ENCODE measurements at regions of chr3 and their contacts with region 1.

Region 1: GRCh38 chr3:52742418-52743041 is 28.2 kb downstream of the NEK4 start:
- DNase-seq: peak; percentile 33
- ATAC-seq: peak; percentile 90
- H3K4me3 ChIP-seq: no peak overlapping the region
- H3K27ac ChIP-seq: no peak overlapping the region
- H3K4me1 ChIP-seq: no peaks in the 10 kb centered on the region
- H3K27me3 ChIP-seq: no peaks in the 10 kb centered on the region
- CTCF ChIP-seq: peak; percentile 56 to 76 (median 69)
- POLR2A ChIP-seq: no peak
- RAD21 ChIP-seq: peak; percentile 80

Region 2: GRCh38 chr3:52455283-52456168 is 287.0 kb before region 1 on chr3 and contains the start of gene NISCH:
- CTCF ChIA-PET with region 1: no interaction called
- POLR2A ChIA-PET with region 1: no interaction called
- RAD21 ChIA-PET with region 1: no interaction called
- intact Hi-C with region 1: no loop called
- DNase-seq: peak; percentile 40
- ATAC-seq: peak; percentile 84
- H3K4me3 ChIP-seq: peak within 1 kb of the TSS; percentile 80 to 94
- H3K27ac ChIP-seq: peak within 1 kb of the TSS; percentile 77
- H3K4me1 ChIP-seq: peaks cover 36 to 61% of the 10 kb centered on the region in 2 experiments
- H3K27me3 ChIP-seq: no peaks in the 10 kb centered on the region
- CTCF ChIP-seq: no peak
- POLR2A ChIP-seq: peak; percentile 66
- RAD21 ChIP-seq: no peak
- total RNA-seq, gene NISCH: 72.8 TPM

Region 3: DNA sequence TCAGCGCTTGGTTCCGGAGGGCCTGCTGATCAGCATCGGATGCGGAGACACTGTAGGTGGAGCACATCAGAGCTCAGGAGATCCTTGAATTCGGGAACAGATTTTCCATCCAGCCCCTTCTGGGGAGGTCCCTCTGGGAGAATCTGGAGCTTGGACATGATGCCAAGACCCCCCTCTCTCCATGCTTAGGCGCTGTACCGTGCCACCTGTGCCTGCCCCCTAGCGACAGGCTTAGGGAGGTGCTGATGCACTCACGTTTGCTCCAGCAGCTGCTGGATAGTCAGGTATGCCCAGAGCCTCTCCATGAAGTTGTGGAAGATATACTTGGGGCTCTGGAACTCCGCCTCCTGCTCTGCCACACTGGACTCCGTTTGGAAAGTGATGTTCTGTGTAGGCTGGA is 78.2 kb after region 1 on chr3:
- CTCF ChIA-PET with region 1: interaction called, 3 read pairs
- POLR2A ChIA-PET with region 1: no interaction called
- RAD21 ChIA-PET with region 1: no interaction called
- intact Hi-C with region 1: loop called (anchors 2 kb)
- DNase-seq: peak; percentile 12
- ATAC-seq: peak; percentile 94
- H3K4me3 ChIP-seq: no peak overlapping the region
- H3K27ac ChIP-seq: no peak overlapping the region
- H3K4me1 ChIP-seq: peaks cover 0 to 6% of the 10 kb centered on the region in 2 experiments; a peak in 1 of 4 replicates
- H3K27me3 ChIP-seq: no peaks in the 10 kb centered on the region
- CTCF ChIP-seq: peak; percentile 46 to 96 (median 90); a peak in 5 of 6 replicates
- POLR2A ChIP-seq: no peak
- RAD21 ChIP-seq: no peak; the same call in 1 of the 2 replicates

Region 4: GRCh38 chr3:52934630-52935530 is 192.3 kb after region 1 on chr3:
- CTCF ChIA-PET with region 1: no interaction called
- POLR2A ChIA-PET with region 1: no interaction called
- RAD21 ChIA-PET with region 1: no interaction called
- intact Hi-C with region 1: loop called (anchors 5 kb)
- DNase-seq: peak; percentile 23
- ATAC-seq: peak; percentile 98
- H3K4me3 ChIP-seq: no peak overlapping the region
- H3K27ac ChIP-seq: no peak overlapping the region
- H3K4me1 ChIP-seq: no peaks in the 10 kb centered on the region
- H3K27me3 ChIP-seq: no peaks in the 10 kb centered on the region
- CTCF ChIP-seq: peak; percentile 53 to 78 (median 76); a peak in 5 of 6 replicates
- POLR2A ChIP-seq: no peak
- RAD21 ChIP-seq: peak; percentile 52

Region 5: GRCh38 chr3:52986938-52987337 is 244.4 kb after region 1 on chr3:
- CTCF ChIA-PET with region 1: no interaction called
- POLR2A ChIA-PET with region 1: no interaction called
- RAD21 ChIA-PET with region 1: no interaction called
- intact Hi-C with region 1: loop called (anchors 5 kb)
- DNase-seq: no peak
- ATAC-seq: no peak
- H3K4me3 ChIP-seq: no peak overlapping the region
- H3K27ac ChIP-seq: no peak overlapping the region
- H3K4me1 ChIP-seq: no peaks in the 10 kb centered on the region
- H3K27me3 ChIP-seq: no peaks in the 10 kb centered on the region
- CTCF ChIP-seq: peak in 2 of 3 experiments; percentile 36 to 39; a peak in 3 of 6 replicates
- POLR2A ChIP-seq: no peak
- RAD21 ChIP-seq: peak; percentile 57

Region 6: DNA sequence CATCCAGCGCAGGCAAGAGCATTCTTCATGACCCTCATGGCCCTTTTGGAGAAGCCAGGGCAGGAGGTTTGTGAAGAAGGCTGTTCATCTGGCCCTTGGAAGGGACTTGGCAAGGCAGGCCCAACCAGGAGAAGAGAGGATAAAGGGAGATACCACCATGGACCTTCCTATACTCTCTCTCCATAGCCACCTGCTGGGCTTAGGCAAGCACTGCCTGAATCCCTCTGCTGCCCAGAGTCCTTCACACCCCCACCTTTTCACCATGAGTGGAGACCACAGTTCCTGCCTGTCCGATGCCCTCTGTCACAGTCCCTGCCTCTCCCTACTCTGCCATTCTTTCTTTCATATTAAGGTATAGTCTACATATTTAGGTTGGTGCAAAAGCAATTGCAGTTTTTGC is 313.9 kb after region 1 on chr3:
- CTCF ChIA-PET with region 1: no interaction called
- POLR2A ChIA-PET with region 1: no interaction called
- RAD21 ChIA-PET with region 1: no interaction called
- intact Hi-C with region 1: loop called (anchors 5 kb)
- DNase-seq: no peak
- ATAC-seq: peak; percentile 98
- H3K4me3 ChIP-seq: no peak overlapping the region
- H3K27ac ChIP-seq: no peak overlapping the region
- H3K4me1 ChIP-seq: no peaks in the 10 kb centered on the region
- H3K27me3 ChIP-seq: no peaks in the 10 kb centered on the region
- CTCF ChIP-seq: peak in 2 of 3 experiments; percentile 54 to 61; a peak in 4 of 6 replicates
- POLR2A ChIP-seq: no peak
- RAD21 ChIP-seq: peak; percentile 30

Region 7: DNA sequence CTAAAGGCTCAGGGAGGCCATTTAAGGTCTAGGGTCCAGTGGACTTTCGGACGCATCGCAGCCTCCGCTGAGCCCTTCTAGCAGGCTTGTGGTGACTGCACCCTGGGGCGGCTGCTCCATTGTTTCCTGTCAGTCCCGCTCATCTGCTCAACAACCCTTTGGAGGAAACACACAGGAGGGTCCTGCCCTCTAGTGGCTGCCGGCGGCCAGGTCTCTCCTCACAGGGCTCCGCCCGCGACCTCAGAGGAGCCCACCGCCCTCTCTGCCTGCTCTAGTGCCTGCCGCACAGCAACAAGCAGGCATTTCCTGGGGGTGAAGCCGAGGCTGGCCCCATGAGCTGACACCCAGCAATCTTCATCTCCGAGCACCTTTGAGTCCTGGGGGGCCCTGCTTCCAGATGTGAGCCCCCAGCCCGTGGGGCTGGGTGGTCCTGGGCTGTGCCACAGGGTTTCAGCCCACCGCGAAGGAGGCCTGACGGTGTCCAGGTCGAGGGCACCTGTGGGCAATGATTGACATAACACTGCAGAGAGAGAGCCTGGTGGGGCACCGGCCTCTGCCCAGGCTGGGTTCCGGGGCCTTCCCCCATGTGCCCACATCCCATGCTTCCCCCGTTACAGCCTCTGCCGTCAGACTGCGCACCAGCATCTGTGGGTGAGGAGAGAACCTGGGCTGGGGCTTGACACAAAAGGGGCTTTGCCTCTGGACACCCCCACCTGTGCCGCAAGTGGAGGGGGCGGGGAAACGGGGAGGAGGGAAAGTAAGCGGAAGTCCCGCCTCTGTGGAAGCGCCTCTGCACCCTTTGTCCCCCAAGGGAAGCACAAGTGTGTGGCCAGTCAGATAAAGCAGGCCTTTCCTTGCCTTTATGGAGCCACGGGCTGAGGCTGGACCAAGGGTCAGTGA is 330.4 kb after region 1 on chr3:
- CTCF ChIA-PET with region 1: no interaction called
- POLR2A ChIA-PET with region 1: no interaction called
- RAD21 ChIA-PET with region 1: no interaction called
- intact Hi-C with region 1: loop called (anchors 1 kb)
- DNase-seq: peak; percentile 48
- ATAC-seq: peak; percentile 93
- H3K4me3 ChIP-seq: peak overlapping the region; percentile 46 to 62
- H3K27ac ChIP-seq: peak overlapping the region; percentile 47; the same call in 1 of the 2 replicates
- H3K4me1 ChIP-seq: peaks cover 6 to 16% of the 10 kb centered on the region in 2 experiments; a peak in 3 of 4 replicates
- H3K27me3 ChIP-seq: no peaks in the 10 kb centered on the region
- CTCF ChIP-seq: peak; percentile 76 to 91 (median 89); a peak in 5 of 6 replicates
- POLR2A ChIP-seq: peak; percentile 39
- RAD21 ChIP-seq: peak; percentile 95